Activated naive CD4-positive, alpha-beta T cell treated with anti-CD3 and anti-CD28 coated beads for 36 hours (primary cell): ENCODE measurements at regions of chr19 and their contacts with region 1.

Region 1: DNA sequence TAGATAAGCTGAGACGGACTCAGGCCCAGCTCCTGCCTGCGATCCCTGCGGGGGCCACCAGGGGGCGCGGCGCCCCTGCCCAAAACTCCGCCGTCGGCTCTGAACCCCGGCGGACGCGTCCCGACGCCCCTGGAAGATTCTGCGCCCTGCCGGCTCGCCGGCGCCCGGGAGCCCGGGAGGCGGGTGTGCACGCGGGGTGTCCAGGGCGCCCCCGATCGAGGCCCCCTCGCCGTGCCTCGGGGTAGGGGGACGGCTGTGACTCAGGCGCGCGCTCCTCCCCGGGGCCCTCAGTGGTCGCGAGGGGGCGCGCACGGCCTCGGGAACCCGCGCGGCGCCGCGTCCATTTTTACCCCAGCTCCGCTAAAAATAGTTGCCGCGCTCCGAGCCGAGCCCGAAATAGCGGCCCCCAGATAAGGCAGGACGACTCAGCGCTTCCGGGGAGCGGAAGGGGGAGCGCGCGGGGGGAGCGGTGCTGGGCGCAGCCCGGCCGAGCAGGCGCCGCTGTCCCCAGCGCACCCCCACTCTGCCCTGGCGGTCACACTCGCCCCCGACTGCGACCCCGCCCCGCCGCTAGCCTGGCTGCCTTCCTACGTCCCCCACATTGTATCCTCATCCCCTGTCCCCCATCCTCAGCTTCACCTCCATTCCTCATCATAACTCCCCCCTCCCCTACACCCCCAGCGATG is 16.0 kb upstream of the ERCC1 start:
- DNase-seq: peak; percentile 81
- H3K4me3 Mint-ChIP-seq: peak overlapping the region; percentile 58
- H3K27ac Mint-ChIP-seq: no peak overlapping the region
- H3K4me1 Mint-ChIP-seq: peaks cover 27% of the 10 kb centered on the region
- H3K27me3 Mint-ChIP-seq: no peaks in the 10 kb centered on the region

Region 2: GRCh38 chr19:45423589-45424190 is 16.0 kb before region 1 on chr19 and contains the start of gene ERCC1:
- CTCF ChIA-PET with region 1: interaction called, 11 read pairs
- intact Hi-C with region 1: loop called (anchors 2 kb)
- DNase-seq: peak; percentile 90
- H3K4me3 Mint-ChIP-seq: peak within 1 kb of the TSS; percentile 94
- H3K27ac Mint-ChIP-seq: peak within 1 kb of the TSS; percentile 90
- H3K4me1 Mint-ChIP-seq: peaks cover 63% of the 10 kb centered on the region
- H3K27me3 Mint-ChIP-seq: peaks cover 3% of the 10 kb centered on the region
- total RNA-seq, gene ERCC1: 28.9 to 30.7 TPM

Region 3: GRCh38 chr19:45455707-45456499 is 16.2 kb after region 1 on chr19:
- CTCF ChIA-PET with region 1: interaction called, 12 read pairs
- intact Hi-C with region 1: no loop called
- DNase-seq: peak; percentile 79
- H3K4me3 Mint-ChIP-seq: no peak overlapping the region
- H3K27ac Mint-ChIP-seq: no peak overlapping the region
- H3K4me1 Mint-ChIP-seq: peaks cover 25% of the 10 kb centered on the region
- H3K27me3 Mint-ChIP-seq: peaks cover 2% of the 10 kb centered on the region

Region 4: DNA sequence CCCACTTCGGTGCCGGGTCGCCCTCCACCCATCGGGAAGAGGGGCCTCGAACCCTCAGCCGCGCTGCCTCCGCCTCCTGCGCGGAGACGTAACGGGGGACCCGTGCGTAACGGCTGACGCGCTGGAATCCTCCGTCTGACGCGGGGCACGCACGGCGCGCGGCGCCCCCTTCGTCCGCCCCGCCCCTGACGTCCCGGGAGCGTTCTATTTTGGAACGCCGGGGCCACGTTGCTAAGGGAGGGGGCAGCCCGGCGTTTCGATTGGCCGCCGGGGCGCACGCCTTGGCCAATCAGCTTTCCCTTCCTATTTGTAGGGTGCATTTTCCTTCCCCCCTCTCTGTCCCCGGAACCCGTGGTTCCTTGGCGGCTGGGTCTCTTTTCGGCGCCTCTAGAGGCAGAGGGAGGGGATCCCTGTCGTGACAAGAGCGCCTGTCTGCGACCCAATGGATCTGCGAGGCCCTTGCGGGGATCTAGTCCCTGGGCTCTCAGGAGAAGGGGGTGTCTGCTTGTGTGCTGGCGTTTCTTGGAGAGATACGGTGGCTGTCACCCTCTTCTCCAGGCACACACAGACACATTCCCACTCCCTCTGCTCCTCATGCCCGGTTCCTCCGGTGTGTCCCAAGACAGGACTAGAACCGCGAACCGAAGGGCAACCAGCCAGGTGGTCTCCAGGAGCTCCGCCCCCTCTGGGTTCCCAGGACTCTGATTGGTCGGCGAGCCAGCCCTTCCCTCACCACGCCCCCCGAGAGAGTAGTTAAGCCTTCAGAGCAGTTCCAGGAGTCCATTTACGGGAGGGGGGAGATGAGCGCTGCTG is 29.6 kb after region 1 on chr19:
- CTCF ChIA-PET with region 1: interaction called, 351 read pairs
- intact Hi-C with region 1: loop called (anchors 1 kb)
- DNase-seq: peak; percentile 91
- H3K4me3 Mint-ChIP-seq: peak overlapping the region; percentile 77
- H3K27ac Mint-ChIP-seq: peak overlapping the region; percentile 75
- H3K4me1 Mint-ChIP-seq: peaks cover 42% of the 10 kb centered on the region
- H3K27me3 Mint-ChIP-seq: peaks cover 26% of the 10 kb centered on the region

Region 5: GRCh38 chr19:45478454-45479238 is 38.9 kb after region 1 on chr19:
- CTCF ChIA-PET with region 1: interaction called, 351 read pairs
- intact Hi-C with region 1: loop called (anchors 1 kb)
- DNase-seq: peak; percentile 96
- H3K4me3 Mint-ChIP-seq: peak overlapping the region; percentile 54
- H3K27ac Mint-ChIP-seq: peak overlapping the region; percentile 95
- H3K4me1 Mint-ChIP-seq: peaks cover 22% of the 10 kb centered on the region
- H3K27me3 Mint-ChIP-seq: peaks cover 2% of the 10 kb centered on the region

Region 6: DNA sequence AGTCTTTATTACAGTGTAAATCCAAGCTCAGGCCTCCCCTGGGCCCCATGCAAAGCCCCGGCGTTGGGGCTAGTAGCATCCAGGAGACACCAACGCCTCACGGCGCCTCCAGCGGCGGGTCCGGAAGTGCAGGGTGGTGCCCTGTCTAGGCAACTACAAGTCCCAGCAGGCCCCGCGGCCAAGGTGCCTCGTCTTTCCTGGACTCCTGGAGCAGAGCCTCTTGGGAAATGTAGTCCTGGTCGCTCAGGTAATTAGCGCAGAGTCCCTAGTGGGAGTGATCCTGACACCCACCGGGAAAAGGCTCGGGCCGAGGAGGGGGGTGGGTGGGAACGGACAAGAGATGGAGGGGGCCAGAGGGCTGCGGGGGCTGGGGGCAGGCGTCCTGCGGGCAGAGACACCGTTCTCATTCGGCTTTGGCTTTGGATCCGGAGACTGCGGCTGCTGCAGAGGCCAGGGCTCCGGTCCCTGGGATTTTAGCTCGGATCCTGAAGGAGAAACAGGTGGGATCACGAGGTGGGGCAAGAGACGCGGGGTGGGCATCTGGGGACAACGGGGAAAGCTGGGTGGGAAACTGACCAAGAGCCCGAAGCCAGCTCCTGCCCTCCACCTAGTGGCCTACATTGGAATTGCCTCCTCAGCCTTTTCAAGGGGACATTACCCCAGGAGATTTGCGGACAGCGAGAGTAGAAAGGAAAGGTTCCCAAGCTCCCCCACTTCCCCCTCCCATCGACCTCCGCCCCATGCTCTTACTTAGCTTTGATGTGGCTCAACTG is 45.8 kb after region 1 on chr19:
- CTCF ChIA-PET with region 1: interaction called, 351 read pairs
- intact Hi-C with region 1: no loop called
- DNase-seq: peak; percentile 99
- H3K4me3 Mint-ChIP-seq: peak overlapping the region; percentile 81
- H3K27ac Mint-ChIP-seq: peak overlapping the region; percentile 46
- H3K4me1 Mint-ChIP-seq: peaks cover 4% of the 10 kb centered on the region
- H3K27me3 Mint-ChIP-seq: no peaks in the 10 kb centered on the region

Region 7: GRCh38 chr19:45681391-45682015 is 241.8 kb after region 1 on chr19:
- CTCF ChIA-PET with region 1: interaction called, 13 read pairs
- intact Hi-C with region 1: no loop called
- DNase-seq: peak; percentile 90
- H3K4me3 Mint-ChIP-seq: peak overlapping the region; percentile 71
- H3K27ac Mint-ChIP-seq: no peak overlapping the region
- H3K4me1 Mint-ChIP-seq: peaks cover 20% of the 10 kb centered on the region
- H3K27me3 Mint-ChIP-seq: no peaks in the 10 kb centered on the region